Vagina (tissue), 2 donors: ENCODE measurements at regions of chr20 and their contacts with region 1.

Region 1: DNA sequence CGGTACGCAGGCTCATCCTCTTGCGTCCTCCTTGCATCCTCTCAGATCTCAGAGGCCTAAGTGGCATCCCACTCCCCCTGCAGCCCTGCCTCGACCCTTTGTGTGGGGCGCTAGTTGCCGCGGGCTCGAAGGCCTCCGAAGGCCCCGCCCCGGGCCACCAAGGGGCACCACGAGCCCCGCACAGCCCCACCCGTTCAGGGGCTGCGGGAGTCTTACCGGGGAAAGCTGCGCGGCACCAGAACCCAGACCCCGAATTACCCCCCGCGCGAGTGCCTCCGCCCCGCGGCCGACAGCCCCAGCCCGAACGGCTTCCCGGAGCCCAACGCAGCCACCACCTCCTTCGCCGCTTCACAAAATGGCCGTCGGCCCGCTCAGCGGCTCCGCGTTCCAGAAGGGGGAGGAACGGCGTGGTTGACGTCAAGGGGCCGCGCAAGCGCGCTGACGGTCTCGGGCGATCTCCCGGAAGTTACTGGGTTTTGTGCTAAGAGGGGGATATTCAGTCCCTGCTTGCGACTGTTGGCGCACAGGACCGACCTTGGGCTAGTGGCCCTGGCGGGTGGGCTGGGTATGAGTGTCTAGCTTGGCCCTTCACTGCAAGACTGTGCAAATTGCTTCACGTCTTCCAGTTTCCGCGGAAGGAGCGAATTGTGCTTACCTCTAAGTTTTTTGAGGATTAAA is at the starts of genes CPNE1 and RBM12:
- DNase-seq: peak in 1 of 2 donors; percentile 93
- H3K4me3 ChIP-seq: peak within 1 kb of the TSS; percentile 89 to 96
- H3K27ac ChIP-seq: peak within 1 kb of the TSS; percentile 100
- H3K4me1 ChIP-seq: peaks cover 43% of the 10 kb centered on the region
- H3K27me3 ChIP-seq: no peaks in the 10 kb centered on the region
- CTCF ChIP-seq: no peak
- POLR2A ChIP-seq: peak in 1 of 2 donors; percentile 95
- total RNA-seq, gene CPNE1: 149 TPM
- total RNA-seq, gene RBM12: 26.8 TPM

Region 2: DNA sequence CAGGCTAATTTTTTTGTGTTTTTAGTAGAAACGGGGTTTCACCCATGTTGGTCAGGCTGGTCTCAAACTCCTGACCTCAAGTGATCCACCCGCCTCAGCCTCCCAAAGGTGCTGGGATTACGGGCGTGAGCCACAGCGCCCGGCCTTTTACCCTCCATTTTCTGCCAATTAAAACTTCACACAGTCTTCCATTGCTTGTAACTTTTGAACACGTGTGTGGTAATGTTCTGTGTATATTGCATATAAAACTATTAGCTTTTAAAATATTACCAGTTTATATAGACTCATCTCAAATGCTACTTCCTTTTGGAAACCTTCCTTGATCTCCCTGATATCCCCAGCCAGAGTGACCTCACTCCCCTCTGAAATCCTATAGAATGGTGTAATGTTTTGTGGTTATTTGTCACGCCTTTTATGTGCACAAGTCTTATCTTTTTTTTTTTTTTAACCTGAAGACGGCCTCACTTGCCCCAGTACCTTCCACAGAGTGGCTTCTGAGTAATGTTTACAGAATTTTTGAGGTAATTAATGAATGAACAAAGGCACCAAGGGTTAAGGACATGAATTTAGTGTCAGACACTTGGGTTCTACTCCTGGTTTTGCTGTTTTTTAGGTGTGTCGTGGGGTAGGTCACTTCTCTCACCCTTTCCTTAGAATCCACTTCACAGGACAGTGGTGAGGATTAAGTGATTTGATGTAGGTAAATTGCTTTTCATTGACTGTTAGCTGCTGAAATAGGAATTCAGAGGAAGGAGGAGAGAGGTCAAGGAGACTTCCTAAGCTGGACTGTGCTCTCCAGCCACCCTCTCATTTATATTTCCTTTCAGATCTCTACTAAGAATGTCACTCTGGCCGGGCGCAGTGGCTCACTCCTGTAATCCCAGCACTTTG is 449.4 kb before region 1 on chr20:
- intact Hi-C with region 1: no loop called
- DNase-seq: no peak
- H3K4me3 ChIP-seq: no peak overlapping the region
- H3K27ac ChIP-seq: no peak overlapping the region
- H3K4me1 ChIP-seq: no peaks in the 10 kb centered on the region
- H3K27me3 ChIP-seq: no peaks in the 10 kb centered on the region
- CTCF ChIP-seq: no peak
- POLR2A ChIP-seq: no peak

Region 3: GRCh38 chr20:35601008-35601973 is 63.4 kb before region 1 on chr20:
- intact Hi-C with region 1: loop called (anchors 1 kb)
- DNase-seq: no peak
- H3K4me3 ChIP-seq: peak overlapping the region; percentile 44 to 59
- H3K27ac ChIP-seq: peak overlapping the region; percentile 16
- H3K4me1 ChIP-seq: peaks cover 21% of the 10 kb centered on the region
- H3K27me3 ChIP-seq: no peaks in the 10 kb centered on the region
- CTCF ChIP-seq: peak; percentile 22 to 55 (median 32)
- POLR2A ChIP-seq: no peak

Region 4: DNA sequence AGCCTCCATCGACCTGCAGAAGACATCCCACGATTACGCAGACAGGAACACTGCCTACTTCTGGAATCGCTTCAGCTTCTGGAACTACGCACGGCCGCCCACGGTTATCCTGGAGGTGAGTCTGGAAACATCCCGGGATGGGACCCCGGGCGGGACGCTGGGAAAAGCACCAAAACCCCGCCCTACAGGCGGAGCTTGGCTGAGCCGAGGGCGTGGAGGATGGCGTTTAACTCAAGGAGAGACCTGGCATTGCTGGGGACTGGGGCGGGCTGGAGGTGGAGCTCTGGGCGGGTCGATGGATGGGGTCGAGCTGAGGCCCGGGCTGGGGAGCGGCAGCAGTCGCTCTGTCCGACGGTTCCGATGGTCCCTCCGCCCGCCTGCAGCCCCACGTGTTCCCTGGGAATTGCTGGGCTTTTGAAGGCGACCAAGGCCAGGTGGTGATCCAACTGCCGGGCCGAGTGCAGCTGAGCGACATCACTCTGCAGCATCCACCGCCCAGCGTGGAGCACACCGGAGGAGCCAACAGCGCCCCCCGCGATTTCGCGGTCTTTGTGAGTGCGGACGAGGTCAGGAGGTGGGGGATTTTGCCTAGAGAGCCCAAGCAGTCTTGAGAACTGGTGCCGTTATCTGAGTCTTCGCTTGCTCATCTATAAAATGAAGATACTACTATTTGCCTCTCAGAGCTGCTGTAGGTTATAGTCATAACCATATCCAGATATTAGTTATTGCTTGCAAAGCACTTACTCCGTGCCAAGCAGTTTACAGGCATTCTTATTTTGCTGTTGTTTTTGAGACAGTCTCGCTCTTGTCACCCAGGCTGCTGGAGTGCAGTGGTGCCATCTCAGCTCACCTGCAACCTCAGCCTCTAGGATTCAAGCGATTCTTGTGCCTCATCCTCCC is 45.2 kb before region 1 on chr20:
- intact Hi-C with region 1: loop called (anchors 5 kb)
- DNase-seq: no peak
- H3K4me3 ChIP-seq: peak overlapping the region; percentile 57 to 64
- H3K27ac ChIP-seq: peak overlapping the region; percentile 87
- H3K4me1 ChIP-seq: peaks cover 33% of the 10 kb centered on the region
- H3K27me3 ChIP-seq: no peaks in the 10 kb centered on the region
- CTCF ChIP-seq: peak in 2 of 3 experiments; percentile 7 to 18
- POLR2A ChIP-seq: no peak

Region 5: DNA sequence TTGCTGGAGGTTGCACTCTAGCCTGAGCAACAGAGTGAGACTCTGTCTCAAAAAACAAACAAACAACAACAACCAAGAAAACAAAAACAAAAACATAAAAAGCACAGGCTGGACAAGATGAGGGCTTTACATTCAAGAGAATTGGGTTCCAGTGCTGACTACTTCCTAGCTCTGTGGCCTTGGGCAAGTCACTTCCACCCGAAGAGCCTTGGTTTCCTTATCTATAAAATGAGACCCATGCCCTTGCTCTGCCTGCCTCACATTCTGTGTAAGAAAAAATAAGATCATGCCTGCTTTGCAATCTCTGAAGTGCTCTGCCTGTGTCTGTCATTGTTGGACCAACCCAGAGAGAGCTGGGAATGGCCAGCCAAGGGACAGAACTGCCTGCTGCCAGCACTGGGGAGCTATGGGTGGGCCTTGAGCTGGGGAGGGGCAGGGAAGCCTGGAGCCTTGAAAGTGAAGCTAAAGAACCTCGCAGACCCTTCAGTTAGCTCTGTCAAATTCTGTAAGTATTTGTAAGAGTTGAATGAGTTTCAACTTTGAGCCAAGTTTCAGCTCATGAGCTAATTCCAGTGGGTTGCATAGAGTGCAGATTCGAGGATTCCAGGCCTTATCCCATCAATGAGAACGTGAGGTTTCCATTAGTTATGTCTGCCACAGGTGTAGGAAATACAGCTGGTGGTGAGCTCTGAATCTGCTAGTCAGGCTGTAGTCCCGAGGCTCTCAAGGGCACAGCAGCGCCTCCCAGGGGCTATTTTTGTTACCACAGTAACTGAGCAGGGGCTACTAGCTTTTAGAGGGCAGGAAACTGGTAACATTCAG is 734.7 kb after region 1 on chr20:
- intact Hi-C with region 1: no loop called
- DNase-seq: no peak
- H3K4me3 ChIP-seq: no peak overlapping the region
- H3K27ac ChIP-seq: no peak overlapping the region
- H3K4me1 ChIP-seq: no peaks in the 10 kb centered on the region
- H3K27me3 ChIP-seq: no peaks in the 10 kb centered on the region
- CTCF ChIP-seq: no peak
- POLR2A ChIP-seq: no peak